RWPE1 (cell line): ENCODE measurements at regions of chr6 and their contacts with region 1.

Region 1: GRCh38 chr6:16409531-16410441 is 171.4 kb downstream of the GMPR start:
- DNase-seq: peak; percentile 51
- H3K27ac ChIP-seq: no peak overlapping the region
- CTCF ChIP-seq: peak; percentile 85

Region 2: DNA sequence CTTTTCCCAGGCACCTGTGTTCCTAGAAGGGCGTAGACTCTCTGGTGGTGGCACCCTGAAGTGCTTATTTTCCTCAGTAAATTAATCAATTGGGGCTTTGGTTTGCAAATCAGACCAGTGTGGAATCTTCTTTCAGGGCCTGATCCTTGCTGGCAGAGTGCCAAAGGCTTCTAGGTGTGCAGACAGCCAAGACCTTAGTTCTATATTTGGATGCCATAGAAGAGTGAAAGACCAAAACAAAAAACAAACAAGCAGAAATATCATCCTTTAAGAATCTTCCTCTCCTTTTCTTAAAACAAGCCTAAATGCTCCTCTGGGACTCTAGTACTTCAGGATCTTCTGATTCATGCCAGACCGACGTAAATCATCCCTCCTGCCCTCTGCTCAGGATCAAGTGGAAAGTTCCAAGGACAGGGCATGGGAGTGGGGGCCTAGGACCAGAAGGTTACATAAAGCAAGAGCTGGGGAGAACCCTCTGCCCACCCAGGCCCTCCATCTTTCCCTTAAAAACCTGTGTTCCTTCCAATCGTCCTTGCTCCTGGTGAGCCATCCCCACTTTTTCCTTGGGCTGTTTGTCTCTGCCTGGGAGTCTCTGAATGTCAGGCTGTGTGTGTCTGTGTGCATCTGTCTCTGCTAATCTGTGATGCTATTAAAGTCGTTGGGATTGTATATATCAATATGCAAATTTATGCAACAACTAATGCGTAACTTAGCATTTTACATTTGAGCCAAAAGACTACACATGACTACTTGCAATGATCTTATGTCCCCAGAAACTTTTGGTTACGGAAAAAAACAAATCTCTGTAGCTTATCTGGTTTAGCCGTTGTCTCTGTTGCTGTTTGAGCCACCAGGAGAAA is 351.3 kb before region 1 on chr6:
- CTCF ChIA-PET with region 1: no interaction called
- POLR2A ChIA-PET with region 1: no interaction called
- DNase-seq: no peak
- H3K27ac ChIP-seq: no peak overlapping the region
- CTCF ChIP-seq: no peak

Region 3: GRCh38 chr6:16332175-16332542 is 77.6 kb before region 1 on chr6:
- CTCF ChIA-PET with region 1: interaction called, 15 read pairs
- POLR2A ChIA-PET with region 1: no interaction called
- DNase-seq: peak; percentile 67
- H3K27ac ChIP-seq: no peak overlapping the region
- CTCF ChIP-seq: peak; percentile 79